Sigmoid colon (tissue), 7 donors: ENCODE measurements at regions of chr12 and their contacts with region 1.

Region 1: DNA sequence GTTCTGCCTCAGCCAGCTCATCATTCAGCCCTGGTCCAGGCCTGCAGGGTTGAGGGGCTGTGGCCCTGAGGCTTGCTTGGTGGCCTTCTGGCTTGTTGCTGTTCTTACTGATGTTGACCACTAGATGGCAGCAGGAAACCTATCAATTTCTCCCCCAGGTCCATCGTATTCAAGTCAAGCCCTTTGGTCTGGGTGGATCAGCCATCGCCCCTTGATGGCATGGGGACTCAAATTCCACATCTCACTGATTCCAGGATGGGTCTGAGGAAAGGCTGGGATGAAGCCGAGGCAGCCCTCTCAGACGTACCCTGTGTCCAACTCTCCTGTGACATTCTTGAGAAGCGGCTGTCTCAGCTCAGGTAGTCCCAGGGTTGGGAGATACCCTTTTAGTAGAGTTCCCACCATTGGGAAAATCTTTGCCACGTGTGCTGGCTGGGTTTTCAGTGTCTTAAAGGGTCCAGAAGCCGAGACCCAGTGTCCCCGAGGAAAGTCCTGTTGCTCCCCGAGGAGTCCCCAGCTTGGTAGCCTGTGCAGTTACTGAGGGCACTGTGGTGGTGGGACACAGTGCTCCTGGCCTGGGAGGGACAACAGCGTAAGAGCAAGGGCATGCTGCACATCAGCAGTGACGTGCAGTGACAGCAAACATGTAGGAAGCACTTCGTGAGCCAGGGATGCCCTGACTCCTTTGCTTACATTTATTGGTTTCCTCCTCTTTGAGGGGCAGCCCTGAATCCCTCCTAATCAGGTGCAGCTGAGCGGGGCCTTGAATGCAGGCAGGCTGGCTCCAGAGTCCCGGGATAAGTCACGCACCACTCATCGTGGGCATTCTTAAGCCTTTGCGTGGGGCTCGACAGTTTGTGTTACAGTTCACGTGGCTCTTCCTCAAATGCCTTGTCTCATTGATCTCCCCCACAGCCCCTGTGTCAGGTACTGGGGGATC is 58.6 kb downstream of the TSPAN9 start:
- DNase-seq: no peak
- H3K4me3 ChIP-seq: no peak overlapping the region
- H3K27ac ChIP-seq: no peak overlapping the region
- H3K4me1 ChIP-seq: peaks cover 0 to 34% (median 31%) of the 10 kb centered on the region in 4 donors
- H3K27me3 ChIP-seq: no peaks in the 10 kb centered on the region
- CTCF ChIP-seq: peak; percentile 57 to 81 (median 69)
- EP300 ChIP-seq: no peak
- POLR2A ChIP-seq: no peak

Region 2: GRCh38 chr12:2794736-2795289 is 341.0 kb before region 1 on chr12 and contains the start of gene FKBP4:
- intact Hi-C with region 1: no loop called
- DNase-seq: peak; percentile 96
- H3K4me3 ChIP-seq: peak within 1 kb of the TSS; percentile 62 to 91 (median 84)
- H3K27ac ChIP-seq: peak within 1 kb of the TSS; percentile 85 to 88 (median 88)
- H3K4me1 ChIP-seq: peaks cover 0 to 29% (median 20%) of the 10 kb centered on the region in 4 donors
- H3K27me3 ChIP-seq: no peaks in the 10 kb centered on the region
- CTCF ChIP-seq: no peak
- EP300 ChIP-seq: peak in 1 of 4 donors; percentile 54
- POLR2A ChIP-seq: peak in 1 of 2 donors; percentile 16
- total RNA-seq, gene FKBP4: 21.3 to 33.7 (median 23.5) TPM

Region 3: GRCh38 chr12:3073438-3074250 is 62.1 kb before region 1 on chr12:
- intact Hi-C with region 1: loop called (anchors 5 kb)
- DNase-seq: peak; percentile 89
- H3K4me3 ChIP-seq: no peak overlapping the region
- H3K27ac ChIP-seq: peak overlapping the region in 2 of 4 donors; percentile 15 to 41
- H3K4me1 ChIP-seq: peaks cover 0 to 42% (median 35%) of the 10 kb centered on the region in 4 donors
- H3K27me3 ChIP-seq: no peaks in the 10 kb centered on the region
- CTCF ChIP-seq: peak; percentile 78 to 96 (median 92)
- EP300 ChIP-seq: no peak
- POLR2A ChIP-seq: no peak

Region 4: DNA sequence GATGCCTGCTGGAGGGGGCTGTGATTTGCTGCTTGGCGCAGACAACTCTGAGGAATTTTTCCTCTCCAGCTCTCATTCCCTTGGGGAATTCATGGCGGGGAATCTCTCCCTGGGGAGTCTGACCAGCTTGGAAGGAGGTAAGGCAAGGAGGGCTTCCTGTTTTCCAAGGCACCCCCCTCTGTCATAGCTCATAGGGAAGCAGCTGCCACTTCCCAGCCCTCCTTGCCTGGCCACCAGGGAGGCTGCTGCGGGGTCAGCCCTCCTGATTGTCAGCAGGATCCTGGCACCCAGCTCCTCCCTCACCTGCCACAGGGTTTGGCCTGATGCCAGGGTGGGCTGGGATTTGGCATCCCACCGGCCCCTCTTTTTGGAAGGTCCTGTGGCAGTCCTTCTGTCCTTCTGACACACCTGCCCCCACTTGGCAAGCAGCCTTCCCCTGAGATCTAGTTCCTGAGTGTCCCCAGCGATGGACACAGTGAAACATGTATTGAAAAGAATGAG is 16.3 kb after region 1 on chr12:
- intact Hi-C with region 1: no loop called
- DNase-seq: no peak
- H3K4me3 ChIP-seq: no peak overlapping the region
- H3K27ac ChIP-seq: peak overlapping the region in 1 of 4 donors; percentile 18
- H3K4me1 ChIP-seq: peaks cover 0 to 41% (median 30%) of the 10 kb centered on the region in 4 donors
- H3K27me3 ChIP-seq: no peaks in the 10 kb centered on the region
- CTCF ChIP-seq: no peak
- EP300 ChIP-seq: no peak
- POLR2A ChIP-seq: no peak

Region 5: GRCh38 chr12:3202734-3203446 is 67.1 kb after region 1 on chr12:
- intact Hi-C with region 1: loop called (anchors 2 kb)
- DNase-seq: no peak
- H3K4me3 ChIP-seq: no peak overlapping the region
- H3K27ac ChIP-seq: no peak overlapping the region
- H3K4me1 ChIP-seq: peaks cover 0 to 46% (median 30%) of the 10 kb centered on the region in 4 donors
- H3K27me3 ChIP-seq: peaks cover 0 to 16% (median 0%) of the 10 kb centered on the region in 3 donors
- CTCF ChIP-seq: peak; percentile 83 to 97 (median 88)
- EP300 ChIP-seq: no peak
- POLR2A ChIP-seq: no peak